Upper lobe of right lung (tissue), 1 donor: ENCODE measurements at regions of chr15 and their contacts with region 1.

Region 1: DNA sequence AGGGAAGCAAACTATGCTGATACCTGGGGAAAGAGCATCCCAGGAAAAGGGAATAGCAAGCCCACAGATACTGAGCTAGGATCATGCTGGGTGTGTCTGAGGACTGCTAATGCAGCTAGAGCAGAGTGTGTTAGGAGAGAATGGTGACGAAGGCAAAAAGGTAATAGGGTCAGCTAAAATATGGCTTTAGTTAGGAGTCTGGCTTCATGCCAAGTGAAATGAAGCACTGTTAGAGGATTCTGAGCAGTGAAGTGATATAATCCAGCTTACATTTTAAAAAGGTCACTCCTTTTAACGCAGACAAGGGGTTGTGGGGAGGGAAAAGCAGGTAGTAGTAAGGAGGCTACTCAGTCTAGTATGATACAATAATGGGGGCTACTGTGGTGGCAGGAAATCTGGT is 30.4 kb downstream of the SECISBP2L start:
- DNase-seq: no peak
- ATAC-seq: no peak
- H3K4me3 ChIP-seq: no peak overlapping the region
- H3K27ac ChIP-seq: no peak overlapping the region
- H3K4me1 ChIP-seq: no peaks in the 10 kb centered on the region
- H3K27me3 ChIP-seq: no peaks in the 10 kb centered on the region
- CTCF ChIP-seq: no peak

Region 2: DNA sequence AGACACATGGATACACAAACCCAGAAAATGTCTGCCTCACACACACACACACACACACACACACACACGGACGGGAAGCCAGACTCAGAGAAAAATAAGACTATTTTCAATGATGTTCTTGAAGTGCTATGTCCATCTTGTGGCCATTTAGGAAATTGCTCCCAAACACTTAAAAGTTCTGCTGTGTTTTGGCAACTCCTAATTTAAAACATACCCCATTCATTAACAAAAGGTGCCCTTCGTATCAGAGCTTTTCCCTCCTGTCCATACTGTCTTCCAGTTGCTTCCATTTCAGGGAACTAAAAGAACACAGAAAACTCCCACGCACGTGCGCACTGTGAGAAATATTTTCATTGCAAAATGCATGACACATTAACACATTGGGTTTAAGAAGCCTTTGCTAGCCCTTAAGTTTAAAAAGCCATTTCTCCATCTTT is 765.2 kb before region 1 on chr15:
- intact Hi-C with region 1: no loop called
- DNase-seq: no peak
- ATAC-seq: peak; percentile 64
- H3K4me3 ChIP-seq: no peak overlapping the region
- H3K27ac ChIP-seq: no peak overlapping the region
- H3K4me1 ChIP-seq: no peaks in the 10 kb centered on the region
- H3K27me3 ChIP-seq: peaks cover 5% of the 10 kb centered on the region
- CTCF ChIP-seq: peak; percentile 58

Region 3: DNA sequence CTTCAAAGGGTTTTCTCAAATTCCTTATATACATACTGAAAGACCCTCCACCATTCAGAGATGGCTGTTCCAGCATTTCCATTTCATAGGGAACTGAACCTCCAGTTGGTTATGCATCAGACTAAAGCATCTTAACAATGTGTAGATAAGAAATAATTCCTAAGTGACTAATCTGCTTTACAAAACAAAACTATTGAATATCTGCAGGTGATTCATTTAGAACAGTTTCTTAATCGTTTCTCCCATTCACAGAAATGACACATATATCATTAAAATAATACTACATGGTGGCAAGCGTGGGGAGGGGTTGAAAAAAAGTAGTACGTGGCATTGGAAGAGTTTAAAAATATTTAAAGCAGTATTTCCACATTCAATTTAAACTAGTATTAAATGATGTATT is 120.0 kb after region 1 on chr15:
- intact Hi-C with region 1: loop called (anchors 10 kb)
- DNase-seq: no peak
- ATAC-seq: no peak
- H3K4me3 ChIP-seq: no peak overlapping the region
- H3K27ac ChIP-seq: no peak overlapping the region
- H3K4me1 ChIP-seq: no peaks in the 10 kb centered on the region
- H3K27me3 ChIP-seq: no peaks in the 10 kb centered on the region
- CTCF ChIP-seq: no peak

Region 4: DNA sequence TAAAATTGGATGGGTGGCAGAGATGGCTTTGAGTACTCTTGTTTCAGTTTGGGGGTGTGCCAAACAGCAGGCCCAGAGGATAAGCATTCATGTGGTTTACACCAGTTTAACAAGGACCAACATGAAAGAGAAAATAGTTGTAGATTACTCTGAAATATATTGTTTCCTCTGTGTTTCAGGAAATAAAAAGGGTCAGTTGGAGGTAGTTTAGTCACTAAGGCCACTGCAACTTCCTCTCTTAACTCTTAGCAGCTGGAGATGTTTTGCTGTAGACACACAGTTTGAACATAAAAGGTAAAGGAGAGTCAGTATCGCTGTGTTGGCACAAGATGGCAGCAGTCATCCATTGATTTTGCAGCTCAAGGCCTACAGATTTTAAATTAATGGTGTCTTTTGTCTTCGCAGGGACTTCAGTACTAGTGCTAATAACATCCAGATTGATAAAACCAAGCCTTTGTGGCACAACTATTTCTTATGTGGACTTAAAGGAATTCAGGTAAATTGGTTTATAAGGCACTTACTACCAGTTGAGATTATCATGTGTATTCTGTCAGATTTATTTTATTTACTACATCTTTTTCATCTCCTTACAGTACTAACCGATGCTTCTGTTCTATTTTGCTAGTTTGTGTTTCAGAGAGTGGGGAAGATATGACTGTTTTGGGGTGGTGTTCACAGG is 219.7 kb after region 1 on chr15:
- intact Hi-C with region 1: no loop called
- DNase-seq: no peak
- ATAC-seq: peak; percentile 89
- H3K4me3 ChIP-seq: no peak overlapping the region
- H3K27ac ChIP-seq: no peak overlapping the region
- H3K4me1 ChIP-seq: peaks cover 7% of the 10 kb centered on the region
- H3K27me3 ChIP-seq: no peaks in the 10 kb centered on the region
- CTCF ChIP-seq: peak; percentile 75

Region 5: GRCh38 chr15:49361370-49361769 is 345.5 kb after region 1 on chr15:
- intact Hi-C with region 1: no loop called
- DNase-seq: no peak
- ATAC-seq: no peak
- H3K4me3 ChIP-seq: no peak overlapping the region
- H3K27ac ChIP-seq: no peak overlapping the region
- H3K4me1 ChIP-seq: no peaks in the 10 kb centered on the region
- H3K27me3 ChIP-seq: no peaks in the 10 kb centered on the region
- CTCF ChIP-seq: no peak

Region 6: GRCh38 chr15:49774689-49775088 is 758.8 kb after region 1 on chr15:
- intact Hi-C with region 1: no loop called
- DNase-seq: no peak
- ATAC-seq: no peak
- H3K4me3 ChIP-seq: no peak overlapping the region
- H3K27ac ChIP-seq: no peak overlapping the region
- H3K4me1 ChIP-seq: no peaks in the 10 kb centered on the region
- H3K27me3 ChIP-seq: no peaks in the 10 kb centered on the region
- CTCF ChIP-seq: no peak